Activated CD4-positive, alpha-beta T cell treated with anti-CD3 and anti-CD28 coated beads, Interleukin-2, amount 10 ng/mL, durations not matched to agents 24 days and 14 days (primary cell): ENCODE measurements at regions of chrX and their contacts with region 1.

Region 1: GRCh38 chrX:13087322-13088155 is 43.1 kb upstream of the FAM9C start:
- DNase-seq: peak; percentile 90
- H3K4me3 Mint-ChIP-seq: peak overlapping the region; percentile 87
- H3K27ac Mint-ChIP-seq: peak overlapping the region; percentile 100
- H3K4me1 Mint-ChIP-seq: peaks cover 59% of the 10 kb centered on the region
- H3K27me3 Mint-ChIP-seq: no peaks in the 10 kb centered on the region

Region 2: DNA sequence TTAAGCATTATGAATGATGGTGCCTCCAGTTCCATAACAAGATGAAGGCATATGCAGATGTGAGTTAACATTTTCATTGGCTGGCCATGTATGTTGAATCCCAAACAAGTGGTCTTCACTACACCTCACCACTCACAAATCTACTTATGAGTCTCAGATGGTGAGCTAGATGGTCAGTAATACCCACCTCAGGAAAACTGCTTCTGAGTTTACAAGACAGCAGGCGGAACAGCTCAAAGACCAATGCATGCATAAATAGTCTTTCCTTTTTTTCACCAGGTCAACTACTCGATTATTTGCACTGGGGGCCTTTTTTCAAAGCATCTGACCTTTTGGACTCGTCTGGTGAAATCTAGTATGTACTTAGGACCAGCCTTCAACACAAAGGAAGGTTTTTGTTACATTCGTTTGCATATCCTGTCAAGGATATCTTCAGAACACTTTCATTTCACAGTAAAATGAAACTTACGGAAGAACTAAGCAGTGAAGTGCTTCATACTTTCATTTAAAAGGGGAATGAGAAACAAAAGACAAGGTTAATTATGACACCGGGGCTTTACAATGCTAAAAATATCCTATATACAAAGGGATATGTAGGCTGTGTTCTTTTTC is 243.8 kb before region 1 on chrX:
- intact Hi-C with region 1: no loop called
- DNase-seq: peak; percentile 60
- H3K4me3 Mint-ChIP-seq: peak overlapping the region; percentile 83
- H3K27ac Mint-ChIP-seq: peak overlapping the region; percentile 95
- H3K4me1 Mint-ChIP-seq: peaks cover 14% of the 10 kb centered on the region
- H3K27me3 Mint-ChIP-seq: no peaks in the 10 kb centered on the region

Region 3: DNA sequence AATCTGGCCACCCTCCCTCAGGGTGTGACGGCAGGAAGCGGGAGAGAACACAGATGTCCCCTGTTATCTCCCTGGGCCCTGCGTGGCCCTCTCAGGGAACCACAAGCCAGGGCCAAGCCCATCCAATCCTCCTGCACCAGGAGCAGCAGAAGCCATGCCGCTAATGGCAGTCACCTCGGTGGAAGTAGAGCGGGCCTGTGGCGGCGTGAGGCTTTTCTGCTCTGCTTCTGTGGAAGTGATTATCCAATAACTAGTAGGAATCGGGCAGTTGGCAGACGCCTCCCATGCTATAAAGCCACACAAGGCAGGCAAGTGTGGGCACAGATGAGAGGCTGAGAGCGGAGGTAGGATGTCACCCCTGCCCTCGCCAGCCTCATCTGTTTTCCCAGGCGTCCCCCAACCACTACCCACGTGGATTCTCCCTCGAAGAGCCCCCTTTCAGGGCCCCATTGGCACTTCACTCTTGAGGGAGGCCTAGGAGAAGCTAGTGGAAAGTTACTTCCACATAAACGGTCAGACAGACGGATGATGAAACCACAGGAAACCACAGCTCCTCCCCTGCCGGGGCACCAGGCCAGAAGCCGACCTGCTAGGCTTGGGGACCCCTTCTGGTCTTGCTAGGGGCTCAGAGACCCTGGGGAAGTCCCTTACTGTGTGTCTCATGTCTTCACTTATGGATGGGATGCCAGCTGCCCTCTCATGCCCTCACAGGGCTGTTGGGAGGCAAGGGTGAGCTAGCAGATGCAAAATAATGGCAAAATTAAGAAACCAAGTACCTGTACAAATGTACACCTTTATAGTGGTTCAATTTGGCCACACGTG is 131.4 kb before region 1 on chrX:
- intact Hi-C with region 1: loop called (anchors 1 kb)
- DNase-seq: peak; percentile 90
- H3K4me3 Mint-ChIP-seq: peak overlapping the region; percentile 90
- H3K27ac Mint-ChIP-seq: peak overlapping the region; percentile 98
- H3K4me1 Mint-ChIP-seq: peaks cover 51% of the 10 kb centered on the region
- H3K27me3 Mint-ChIP-seq: no peaks in the 10 kb centered on the region

Region 4: DNA sequence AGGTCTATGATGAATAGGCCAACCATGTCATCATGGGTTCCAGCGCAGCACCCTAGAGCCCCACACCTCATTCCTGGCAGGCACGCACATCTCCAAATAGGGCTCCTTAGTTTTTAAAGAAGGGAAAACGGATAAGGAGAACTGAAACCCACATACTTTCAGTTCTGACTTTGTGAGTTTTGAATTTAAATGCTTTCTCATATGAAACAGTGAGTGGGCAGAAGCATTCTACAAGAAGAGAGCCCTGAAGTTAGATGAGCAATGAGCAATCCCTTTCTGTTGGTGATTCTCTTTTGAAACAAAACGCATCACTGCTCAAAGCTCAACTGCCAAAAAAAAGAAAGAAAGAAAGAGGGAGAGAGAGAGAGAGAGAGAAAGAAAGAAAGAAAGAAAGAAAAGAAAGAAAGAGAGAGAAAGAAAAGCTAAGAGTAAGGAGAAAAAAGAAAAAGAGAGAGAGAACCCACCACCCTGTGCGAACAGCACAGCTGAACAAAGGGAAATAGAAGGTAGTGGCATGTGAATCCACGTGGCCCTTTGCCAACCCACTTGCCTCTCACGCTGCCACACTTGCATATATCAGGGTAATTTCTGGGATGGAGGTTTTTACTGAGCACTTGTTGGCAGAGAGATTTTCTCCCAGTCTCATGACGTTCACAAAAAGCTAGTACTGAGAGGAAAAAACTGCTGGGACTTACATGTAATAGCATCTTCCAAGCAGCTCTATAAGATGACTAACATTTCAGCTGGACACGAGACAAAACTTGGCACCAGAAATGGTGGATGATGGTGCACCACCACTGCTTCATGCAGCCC is 81.7 kb before region 1 on chrX:
- intact Hi-C with region 1: loop called (anchors 1 kb)
- DNase-seq: peak; percentile 66
- H3K4me3 Mint-ChIP-seq: peak overlapping the region; percentile 87
- H3K27ac Mint-ChIP-seq: peak overlapping the region; percentile 100
- H3K4me1 Mint-ChIP-seq: peaks cover 50% of the 10 kb centered on the region
- H3K27me3 Mint-ChIP-seq: no peaks in the 10 kb centered on the region

Region 5: DNA sequence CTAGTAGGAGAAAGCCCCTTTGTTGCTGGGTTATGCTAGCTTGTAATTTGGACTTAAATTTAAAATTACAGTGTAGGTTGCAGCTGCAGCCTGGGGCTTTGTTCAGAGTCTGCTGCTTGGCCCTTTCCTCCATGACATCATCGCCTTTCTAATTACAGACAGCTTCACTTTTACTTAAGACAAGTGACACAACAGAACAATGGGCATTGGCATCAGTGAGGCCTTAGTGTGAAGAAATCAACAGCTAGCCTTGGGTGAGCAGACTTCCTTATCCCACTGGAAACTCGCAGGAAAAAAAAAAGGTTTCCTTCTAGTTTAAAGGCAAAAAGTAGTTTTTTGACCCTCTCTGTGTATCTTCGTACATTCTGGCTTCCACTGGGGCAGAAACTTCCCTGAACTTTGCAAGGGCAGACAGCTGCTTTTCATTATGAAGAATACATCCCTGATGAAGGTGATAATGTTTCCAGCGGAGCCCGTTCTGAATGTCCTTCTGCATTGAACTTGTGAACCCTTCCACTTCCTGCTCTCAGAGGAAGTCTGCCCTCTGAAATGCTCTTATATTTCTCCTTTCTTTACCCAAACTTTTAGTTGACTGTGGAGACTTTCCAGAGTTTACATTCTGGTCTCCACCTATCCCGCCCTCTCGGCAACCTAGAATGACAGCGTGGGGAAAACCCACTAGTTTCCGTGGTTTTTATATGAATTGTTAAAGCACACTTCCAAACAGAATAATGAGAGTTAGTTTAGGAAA is 80.1 kb after region 1 on chrX:
- intact Hi-C with region 1: loop called (anchors 2 kb)
- DNase-seq: peak; percentile 62
- H3K4me3 Mint-ChIP-seq: peak overlapping the region; percentile 56
- H3K27ac Mint-ChIP-seq: peak overlapping the region; percentile 79
- H3K4me1 Mint-ChIP-seq: peaks cover 19% of the 10 kb centered on the region
- H3K27me3 Mint-ChIP-seq: no peaks in the 10 kb centered on the region

Region 6: DNA sequence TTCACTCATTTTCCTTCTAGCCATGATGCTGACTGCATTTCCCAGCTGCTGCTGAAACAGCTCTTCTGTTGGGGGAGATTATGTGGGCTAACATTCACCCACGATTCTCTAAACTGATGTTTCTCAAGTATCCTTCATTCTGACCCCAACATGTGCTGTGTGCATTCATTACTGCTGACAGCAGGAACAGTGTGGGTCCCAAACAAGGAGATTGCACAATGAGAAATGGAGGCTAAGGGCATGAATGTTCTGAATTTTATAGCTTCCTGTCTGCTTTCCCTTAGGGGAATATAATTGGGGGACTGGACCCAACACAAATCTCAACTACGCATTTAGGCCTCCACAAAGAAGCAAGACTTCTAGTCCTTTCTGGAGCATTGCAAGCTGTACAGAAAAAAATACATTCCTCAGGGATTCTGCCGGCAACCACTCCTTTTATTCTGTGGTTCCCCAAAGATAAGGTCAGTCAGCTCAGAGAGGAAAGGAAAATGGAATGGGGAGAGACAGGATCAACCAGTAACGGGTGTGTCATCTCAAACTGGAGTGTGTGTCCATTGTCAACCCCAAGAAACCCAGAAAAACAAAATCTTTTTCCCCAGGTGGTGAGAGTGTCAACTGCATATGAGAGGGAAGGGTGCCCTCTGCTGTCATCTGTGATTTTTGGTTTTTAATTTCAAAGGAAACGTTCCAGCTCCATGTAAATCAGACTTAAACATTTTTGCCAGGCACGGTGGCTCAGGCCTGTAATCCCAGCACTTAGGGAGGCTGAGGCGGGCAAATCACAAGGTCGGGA is 400.4 kb after region 1 on chrX:
- intact Hi-C with region 1: loop called (anchors 1 kb)
- DNase-seq: peak; percentile 85
- H3K4me3 Mint-ChIP-seq: no peak overlapping the region
- H3K27ac Mint-ChIP-seq: peak overlapping the region; percentile 81
- H3K4me1 Mint-ChIP-seq: peaks cover 20% of the 10 kb centered on the region
- H3K27me3 Mint-ChIP-seq: no peaks in the 10 kb centered on the region

Region 7: DNA sequence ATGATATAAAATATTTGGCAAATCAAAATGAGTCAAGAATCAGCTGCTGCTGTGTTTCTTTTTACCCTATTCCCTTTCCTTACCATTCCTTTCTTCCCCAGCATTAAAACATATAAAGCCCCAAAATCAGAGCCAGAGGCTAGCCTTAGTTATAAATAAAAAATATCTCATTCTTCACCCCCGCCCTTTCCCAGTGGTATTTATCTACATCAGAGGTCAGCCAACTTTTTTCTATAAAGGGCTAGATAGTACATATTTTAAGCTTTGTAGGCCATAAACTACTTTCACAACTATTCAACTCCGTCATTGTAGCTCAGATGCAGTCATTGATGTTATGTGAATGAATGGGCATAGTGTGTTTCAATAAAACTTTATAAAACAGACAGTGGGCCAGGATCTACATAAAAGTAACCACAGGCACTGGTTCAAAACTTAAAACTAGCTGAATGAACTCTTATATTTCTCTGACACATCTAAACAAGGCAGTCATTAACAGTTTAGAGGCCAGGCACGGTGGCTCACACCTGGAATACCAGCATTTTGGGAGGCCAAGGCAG is 534.9 kb after region 1 on chrX:
- intact Hi-C with region 1: no loop called
- DNase-seq: no peak
- H3K4me3 Mint-ChIP-seq: no peak overlapping the region
- H3K27ac Mint-ChIP-seq: no peak overlapping the region
- H3K4me1 Mint-ChIP-seq: peaks cover 5% of the 10 kb centered on the region
- H3K27me3 Mint-ChIP-seq: no peaks in the 10 kb centered on the region